Astrocyte of the cerebellum (primary cell): ENCODE measurements at regions of chr15 and their contacts with region 1.

Region 1: GRCh38 chr15:34616613-34617012 is 33.2 kb upstream of the GOLGA8B start:
- DNase-seq: peak; percentile 11
- H3K4me3 ChIP-seq: no peak overlapping the region
- CTCF ChIP-seq: peak; percentile 17

Region 2: DNA sequence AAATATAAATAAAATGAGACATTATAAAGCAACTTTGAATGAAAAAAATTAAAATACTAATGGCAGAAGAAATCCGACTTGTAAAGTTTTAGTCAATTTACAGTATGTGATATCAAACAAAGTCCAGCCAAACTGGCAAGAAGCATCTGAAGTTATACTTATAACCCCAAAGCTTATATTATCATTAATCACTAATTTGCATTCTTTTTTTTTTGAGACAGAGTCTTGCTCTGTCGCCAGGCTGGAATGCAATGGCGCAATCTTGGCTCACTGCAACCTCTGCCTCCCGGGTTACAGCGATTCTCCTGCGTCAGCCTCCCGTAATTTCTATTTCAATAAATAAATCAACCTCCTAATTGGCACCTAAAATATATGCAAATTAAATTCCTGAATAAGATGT is 272.9 kb after region 1 on chr15:
- in situ Hi-C with region 1: loop called (anchors 25 kb)
- DNase-seq: no peak
- H3K4me3 ChIP-seq: no peak overlapping the region
- CTCF ChIP-seq: no peak